ENCODE measurements at regions of chr6 and their contacts with region 1.

Region 1: DNA sequence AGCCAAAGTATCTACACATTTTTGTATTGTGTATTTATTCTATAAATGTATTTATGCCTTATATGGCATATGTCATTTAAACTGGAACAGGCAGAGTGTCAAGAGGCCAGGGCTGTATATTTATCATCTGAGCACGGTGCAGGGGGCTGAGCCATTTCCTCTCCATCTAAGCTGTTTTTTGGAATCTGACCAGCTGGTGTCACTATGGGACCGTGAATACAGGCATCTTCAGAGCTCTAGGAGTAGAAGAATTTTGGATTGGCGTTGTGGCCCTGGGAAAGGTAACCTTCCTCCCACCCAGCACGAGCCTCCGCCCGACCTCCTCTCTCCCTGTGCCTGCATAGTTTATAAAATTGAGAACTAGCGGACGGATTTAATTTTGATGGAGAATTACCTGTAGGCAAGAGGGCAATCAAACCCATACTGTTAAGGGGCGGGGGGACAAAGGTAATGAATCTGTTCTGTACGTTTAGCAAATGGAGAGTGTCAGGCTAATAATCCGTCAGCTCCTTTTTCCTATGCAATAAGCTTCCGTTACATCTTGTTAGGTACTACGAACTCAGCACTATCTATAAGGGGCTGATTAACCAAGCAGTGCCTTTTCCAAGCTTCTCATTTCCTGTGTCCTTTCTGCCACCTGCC is 29.0 kb upstream of the EEF1E1 start:
- DNase-seq: peak; percentile 33 to 50 (median 42)
- ATAC-seq: peak; percentile 45
- H3K4me3 ChIP-seq: no peak overlapping the region
- H3K27ac ChIP-seq: no peak overlapping the region
- H3K4me1 ChIP-seq: no peaks in the 10 kb centered on the region
- H3K27me3 ChIP-seq: no peaks in the 10 kb centered on the region
- CTCF ChIP-seq: peak; percentile 5 to 56 (median 44)
- POLR2A ChIP-seq: no peak

Region 2: DNA sequence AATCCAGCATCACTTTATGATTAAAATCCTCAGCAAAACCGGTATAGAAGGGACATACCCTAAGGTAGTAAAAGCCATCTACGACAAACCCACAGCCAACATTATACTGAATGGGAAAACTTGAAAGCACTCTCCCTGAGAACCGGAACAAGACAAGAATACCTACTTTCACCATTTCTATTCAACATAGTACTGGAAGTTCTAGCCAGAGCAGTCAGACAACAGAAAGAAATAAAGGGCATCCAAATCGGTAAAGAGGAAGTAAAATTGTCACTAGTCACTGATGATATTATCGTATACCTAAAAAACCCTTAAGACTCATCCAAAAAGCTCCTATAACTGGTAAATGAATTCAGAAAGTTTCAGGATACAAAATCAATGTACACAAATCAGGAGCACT is 100.5 kb before region 1 on chr6:
- intact Hi-C with region 1: no loop called
- DNase-seq: no peak
- ATAC-seq: no peak
- H3K4me3 ChIP-seq: no peak overlapping the region
- H3K27ac ChIP-seq: no peak overlapping the region
- H3K4me1 ChIP-seq: peaks cover 23% of the 10 kb centered on the region
- H3K27me3 ChIP-seq: no peaks in the 10 kb centered on the region
- CTCF ChIP-seq: no peak
- POLR2A ChIP-seq: no peak

Region 3: GRCh38 chr6:8219352-8219943 is 88.1 kb after region 1 on chr6:
- intact Hi-C with region 1: loop called (anchors 10 kb)
- DNase-seq: peak; percentile 30 to 51 (median 45)
- ATAC-seq: peak; percentile 64
- H3K4me3 ChIP-seq: no peak overlapping the region
- H3K27ac ChIP-seq: no peak overlapping the region
- H3K4me1 ChIP-seq: no peaks in the 10 kb centered on the region
- H3K27me3 ChIP-seq: no peaks in the 10 kb centered on the region
- CTCF ChIP-seq: peak; percentile 47 to 82 (median 69)
- POLR2A ChIP-seq: no peak